B cell (primary cell): ENCODE measurements at regions of chr1 and their contacts with region 1.

Region 1: DNA sequence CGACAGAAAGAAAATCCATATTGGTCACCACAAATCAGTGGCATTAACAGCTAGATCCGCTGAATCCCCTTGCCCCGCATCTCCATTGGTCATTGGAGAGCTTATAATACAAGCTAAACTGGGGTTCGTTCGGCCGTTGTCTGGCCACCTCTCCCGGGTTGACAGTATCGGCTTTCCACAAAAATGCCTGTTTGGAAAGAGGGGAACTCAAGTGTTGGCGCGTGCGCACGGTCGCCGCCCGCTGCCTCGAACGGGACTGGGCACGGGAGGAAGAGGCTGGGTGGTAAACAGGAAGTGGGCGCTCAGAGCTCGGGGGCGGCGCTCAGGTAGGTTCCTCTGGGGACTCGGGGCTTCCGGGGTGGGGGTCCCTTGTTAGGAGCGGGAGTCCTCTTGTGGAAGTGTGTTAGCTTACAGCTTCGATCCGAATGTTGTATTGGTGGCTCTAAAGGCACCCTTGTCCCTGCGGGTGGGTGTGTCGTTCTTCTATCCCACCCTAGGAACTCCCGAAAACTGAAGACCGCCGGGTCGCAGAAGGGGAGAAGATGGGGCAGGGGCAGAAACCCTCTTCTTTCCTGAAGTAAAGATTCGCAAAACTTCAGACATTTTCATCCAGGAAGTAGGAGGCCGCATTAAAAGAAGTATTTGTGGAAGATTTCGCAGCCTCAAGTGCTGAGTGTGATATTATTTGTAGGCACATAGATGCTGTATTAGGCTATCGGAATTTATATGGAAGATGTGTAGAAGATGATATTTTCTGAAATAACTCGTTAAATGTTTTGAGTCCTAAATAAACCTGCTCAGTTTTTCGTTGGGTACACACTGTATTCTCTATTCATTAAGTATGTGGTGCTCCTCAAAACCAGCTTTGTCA is 962 bp downstream of the BROX start:
- DNase-seq: peak; percentile 97
- ATAC-seq: peak; percentile 73
- H3K4me3 ChIP-seq: peak overlapping the region; percentile 70 to 98 (median 81)
- H3K4me3 Mint-ChIP-seq: peak overlapping the region; percentile 97
- H3K27ac ChIP-seq: peak overlapping the region; percentile 97 to 99
- H3K27ac Mint-ChIP-seq: peak overlapping the region; percentile 100
- H3K4me1 ChIP-seq: peaks cover 26 to 35% of the 10 kb centered on the region in 2 donors
- H3K4me1 Mint-ChIP-seq: peaks cover 48% of the 10 kb centered on the region
- H3K27me3 ChIP-seq: no peaks in the 10 kb centered on the region
- H3K27me3 Mint-ChIP-seq: no peaks in the 10 kb centered on the region
- CTCF ChIP-seq: peak; percentile 13

Region 2: GRCh38 chr1:222539951-222540597 is 173.3 kb before region 1 on chr1:
- CTCF ChIA-PET with region 1: no interaction called
- POLR2A ChIA-PET with region 1: no interaction called
- intact Hi-C with region 1: no loop called
- DNase-seq: no peak
- ATAC-seq: no peak
- H3K4me3 ChIP-seq: no peak overlapping the region
- H3K4me3 Mint-ChIP-seq: no peak overlapping the region
- H3K27ac ChIP-seq: no peak overlapping the region
- H3K27ac Mint-ChIP-seq: no peak overlapping the region
- H3K4me1 ChIP-seq: no peaks in the 10 kb centered on the region
- H3K4me1 Mint-ChIP-seq: no peaks in the 10 kb centered on the region
- H3K27me3 ChIP-seq: peaks cover 0 to 3% (median 3%) of the 10 kb centered on the region in 4 experiments
- H3K27me3 Mint-ChIP-seq: peaks cover 15% of the 10 kb centered on the region
- CTCF ChIP-seq: no peak

Region 3: GRCh38 chr1:222589462-222590302 is 123.6 kb before region 1 on chr1 and contains the start of gene TAF1A:
- CTCF ChIA-PET with region 1: no interaction called
- POLR2A ChIA-PET with region 1: no interaction called
- intact Hi-C with region 1: loop called (anchors 1 kb)
- DNase-seq: peak; percentile 87
- ATAC-seq: peak; percentile 99
- H3K4me3 ChIP-seq: peak within 1 kb of the TSS; percentile 68 to 95 (median 93)
- H3K4me3 Mint-ChIP-seq: peak within 1 kb of the TSS; percentile 98
- H3K27ac ChIP-seq: peak within 1 kb of the TSS; percentile 66 to 92
- H3K27ac Mint-ChIP-seq: peak within 1 kb of the TSS; percentile 98
- H3K4me1 ChIP-seq: peaks cover 28 to 37% of the 10 kb centered on the region in 2 donors
- H3K4me1 Mint-ChIP-seq: peaks cover 54% of the 10 kb centered on the region
- H3K27me3 ChIP-seq: no peaks in the 10 kb centered on the region
- H3K27me3 Mint-ChIP-seq: no peaks in the 10 kb centered on the region
- CTCF ChIP-seq: no peak
- total RNA-seq, gene TAF1A: 23.7 and 25.9 TPM in 2 replicates

Region 4: DNA sequence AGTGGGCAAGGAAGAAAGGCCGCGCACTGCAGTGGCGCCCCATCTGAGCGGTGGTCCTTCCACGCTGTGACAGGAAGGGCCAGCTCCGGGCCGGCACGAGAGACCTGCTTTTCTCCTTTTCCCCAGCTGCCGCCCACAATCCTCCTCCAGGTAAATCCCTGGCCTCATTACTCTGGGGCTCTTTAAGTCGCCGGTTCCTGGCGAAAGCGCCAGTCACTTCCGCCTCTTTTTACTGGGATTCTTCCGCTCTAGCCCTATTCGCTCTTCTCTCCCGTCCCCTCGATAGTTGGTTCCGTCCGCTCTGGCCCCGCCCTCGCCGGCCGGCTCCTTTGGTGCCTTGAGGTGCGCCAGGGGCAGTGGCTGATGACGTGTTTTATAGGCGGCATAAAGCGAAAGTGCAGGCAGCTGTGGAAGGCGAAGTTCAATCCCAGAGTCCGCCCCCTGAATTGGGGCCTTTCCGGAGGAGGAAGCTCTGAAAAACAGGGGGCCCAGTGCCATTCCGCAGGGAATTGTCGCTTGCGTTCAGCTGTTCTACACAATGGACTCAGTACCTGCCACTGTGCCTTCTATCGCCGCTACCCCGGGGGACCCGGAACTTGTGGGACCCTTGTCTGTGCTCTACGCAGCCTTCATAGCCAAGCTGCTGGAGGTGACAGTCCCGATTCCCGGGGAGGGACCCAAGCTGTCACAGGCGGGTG is 69.2 kb before region 1 on chr1:
- CTCF ChIA-PET with region 1: interaction called, 4 read pairs
- POLR2A ChIA-PET with region 1: interaction called, 10 read pairs
- intact Hi-C with region 1: loop called (anchors 1 kb)
- DNase-seq: peak; percentile 98
- ATAC-seq: peak; percentile 96
- H3K4me3 ChIP-seq: peak overlapping the region; percentile 71 to 98 (median 95)
- H3K4me3 Mint-ChIP-seq: peak overlapping the region; percentile 86
- H3K27ac ChIP-seq: peak overlapping the region; percentile 97
- H3K27ac Mint-ChIP-seq: peak overlapping the region; percentile 91
- H3K4me1 ChIP-seq: peaks cover 13 to 15% of the 10 kb centered on the region in 2 donors
- H3K4me1 Mint-ChIP-seq: peaks cover 30% of the 10 kb centered on the region
- H3K27me3 ChIP-seq: no peaks in the 10 kb centered on the region
- H3K27me3 Mint-ChIP-seq: no peaks in the 10 kb centered on the region
- CTCF ChIP-seq: no peak

Region 5: GRCh38 chr1:222670110-222670509 is 43.2 kb before region 1 on chr1:
- CTCF ChIA-PET with region 1: no interaction called
- POLR2A ChIA-PET with region 1: no interaction called
- intact Hi-C with region 1: loop called (anchors 5 kb)
- DNase-seq: no peak
- ATAC-seq: no peak
- H3K4me3 ChIP-seq: no peak overlapping the region
- H3K4me3 Mint-ChIP-seq: no peak overlapping the region
- H3K27ac ChIP-seq: peak overlapping the region in 1 of 2 donors; percentile 12
- H3K27ac Mint-ChIP-seq: peak overlapping the region; percentile 50
- H3K4me1 ChIP-seq: no peaks in the 10 kb centered on the region
- H3K4me1 Mint-ChIP-seq: no peaks in the 10 kb centered on the region
- H3K27me3 ChIP-seq: no peaks in the 10 kb centered on the region
- H3K27me3 Mint-ChIP-seq: no peaks in the 10 kb centered on the region
- CTCF ChIP-seq: no peak

Region 6: DNA sequence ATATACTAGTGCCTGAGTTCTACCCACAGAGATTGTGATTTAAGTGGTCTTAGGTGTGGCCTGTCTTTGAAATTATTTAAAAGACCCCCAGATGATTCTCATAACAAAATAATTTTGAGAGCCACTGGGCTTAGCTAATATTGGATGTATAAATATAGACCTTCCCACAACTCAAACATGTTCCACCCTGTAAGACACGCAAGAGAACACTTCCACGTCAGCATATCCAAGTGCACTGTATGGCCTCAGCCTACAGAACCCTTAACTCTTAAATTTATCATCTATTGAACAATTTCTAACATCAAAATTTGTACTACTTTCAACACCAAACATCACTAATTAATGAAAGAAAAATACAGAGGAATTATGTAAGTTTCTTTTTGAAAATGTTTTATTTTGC is 26.1 kb after region 1 on chr1:
- CTCF ChIA-PET with region 1: interaction called, 17 read pairs
- POLR2A ChIA-PET with region 1: interaction called, 5 read pairs
- intact Hi-C with region 1: no loop called
- DNase-seq: no peak
- ATAC-seq: no peak
- H3K4me3 ChIP-seq: peak overlapping the region; percentile 17 to 53 (median 33)
- H3K4me3 Mint-ChIP-seq: no peak overlapping the region
- H3K27ac ChIP-seq: peak overlapping the region; percentile 50 to 77
- H3K27ac Mint-ChIP-seq: no peak overlapping the region
- H3K4me1 ChIP-seq: peaks cover 58 to 61% of the 10 kb centered on the region in 2 donors
- H3K4me1 Mint-ChIP-seq: peaks cover 44% of the 10 kb centered on the region
- H3K27me3 ChIP-seq: no peaks in the 10 kb centered on the region
- H3K27me3 Mint-ChIP-seq: no peaks in the 10 kb centered on the region
- CTCF ChIP-seq: no peak

Region 7: GRCh38 chr1:223081181-223081994 is 368.1 kb after region 1 on chr1:
- CTCF ChIA-PET with region 1: interaction called, 6 read pairs
- POLR2A ChIA-PET with region 1: interaction called, 6 read pairs
- intact Hi-C with region 1: loop called (anchors 1 kb)
- DNase-seq: peak; percentile 85
- ATAC-seq: peak; percentile 97
- H3K4me3 ChIP-seq: peak overlapping the region; percentile 11 to 85 (median 64)
- H3K4me3 Mint-ChIP-seq: peak overlapping the region; percentile 84
- H3K27ac ChIP-seq: peak overlapping the region; percentile 34 to 71
- H3K27ac Mint-ChIP-seq: peak overlapping the region; percentile 86
- H3K4me1 ChIP-seq: no peaks in the 10 kb centered on the region
- H3K4me1 Mint-ChIP-seq: no peaks in the 10 kb centered on the region
- H3K27me3 ChIP-seq: peaks cover 0 to 5% (median 0%) of the 10 kb centered on the region in 4 experiments
- H3K27me3 Mint-ChIP-seq: peaks cover 12% of the 10 kb centered on the region
- CTCF ChIP-seq: peak; percentile 96